ENCODE measurements at regions of chr6 and their contacts with region 1.

Region 1: GRCh38 chr6:43013843-43014433 is at the starts of genes KLHDC3 and MEA1:
- DNase-seq: peak; percentile 100
- H3K4me3 ChIP-seq: peak within 1 kb of the TSS; percentile 99
- H3K27ac ChIP-seq: peak within 1 kb of the TSS; percentile 57
- H3K27me3 ChIP-seq: no peaks in the 10 kb centered on the region
- CTCF ChIP-seq: no peak
- polyA plus RNA-seq, gene KLHDC3: 41.3 and 48.8 TPM in 2 replicates
- polyA plus RNA-seq, gene MEA1: 86.5 and 97.9 TPM in 2 replicates

Region 2: DNA sequence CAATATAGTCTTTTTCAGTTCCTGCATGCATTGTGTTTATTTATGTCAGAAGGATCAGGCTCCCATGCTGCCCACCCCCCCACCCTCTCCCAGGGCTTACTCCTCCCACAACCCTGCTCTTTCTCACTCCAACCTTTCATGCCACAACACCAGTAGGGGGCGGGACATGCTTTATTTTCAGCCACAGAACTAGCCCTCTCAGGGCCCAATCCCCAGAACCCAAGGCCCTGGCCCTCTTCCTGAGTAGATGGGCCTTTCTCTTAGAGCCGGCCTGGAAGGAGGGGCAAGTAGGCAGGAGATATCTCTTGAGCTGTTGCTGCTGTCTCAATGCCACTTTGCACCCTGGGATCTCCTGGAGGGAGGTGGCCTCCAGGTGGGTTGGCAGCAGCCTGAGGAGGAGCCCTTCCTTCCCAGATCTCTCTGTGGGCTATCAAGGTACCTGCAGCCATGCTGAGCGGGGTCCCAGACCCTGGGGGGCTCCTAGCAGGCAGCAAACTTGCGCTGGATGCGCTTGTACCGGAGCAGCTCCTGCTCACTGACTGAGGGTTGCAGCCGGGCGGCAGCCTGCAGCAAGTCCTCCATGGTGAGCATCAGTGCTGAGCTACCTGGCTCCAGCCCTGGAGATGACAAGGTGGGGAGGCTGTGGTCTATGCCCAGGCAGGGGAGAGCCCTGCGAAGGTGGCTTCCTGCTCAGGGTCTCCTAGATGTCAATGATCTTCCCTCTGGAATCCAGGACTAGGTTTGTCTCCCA is 49.9 kb before region 1 on chr6:
- CTCF ChIA-PET with region 1: no interaction called
- POLR2A ChIA-PET with region 1: no interaction called
- DNase-seq: peak; percentile 20
- H3K4me3 ChIP-seq: no peak overlapping the region
- H3K27ac ChIP-seq: no peak overlapping the region
- H3K27me3 ChIP-seq: no peaks in the 10 kb centered on the region
- CTCF ChIP-seq: peak; percentile 41

Region 3: GRCh38 chr6:43053545-43054205 is 39.7 kb after region 1 on chr6 and contains the start of gene CUL7:
- CTCF ChIA-PET with region 1: no interaction called
- POLR2A ChIA-PET with region 1: interaction called, 25 read pairs
- DNase-seq: peak; percentile 85
- H3K4me3 ChIP-seq: peak within 1 kb of the TSS; percentile 89
- H3K27ac ChIP-seq: peak within 1 kb of the TSS; percentile 93
- H3K27me3 ChIP-seq: no peaks in the 10 kb centered on the region
- CTCF ChIP-seq: no peak
- polyA plus RNA-seq, gene CUL7: 37.5 and 44.8 TPM in 2 replicates